Activated CD4-positive, alpha-beta memory T cell treated with anti-CD3 and anti-CD28 coated beads for 36 hours (primary cell): ENCODE measurements at regions of chr12 and their contacts with region 1.

Region 1: DNA sequence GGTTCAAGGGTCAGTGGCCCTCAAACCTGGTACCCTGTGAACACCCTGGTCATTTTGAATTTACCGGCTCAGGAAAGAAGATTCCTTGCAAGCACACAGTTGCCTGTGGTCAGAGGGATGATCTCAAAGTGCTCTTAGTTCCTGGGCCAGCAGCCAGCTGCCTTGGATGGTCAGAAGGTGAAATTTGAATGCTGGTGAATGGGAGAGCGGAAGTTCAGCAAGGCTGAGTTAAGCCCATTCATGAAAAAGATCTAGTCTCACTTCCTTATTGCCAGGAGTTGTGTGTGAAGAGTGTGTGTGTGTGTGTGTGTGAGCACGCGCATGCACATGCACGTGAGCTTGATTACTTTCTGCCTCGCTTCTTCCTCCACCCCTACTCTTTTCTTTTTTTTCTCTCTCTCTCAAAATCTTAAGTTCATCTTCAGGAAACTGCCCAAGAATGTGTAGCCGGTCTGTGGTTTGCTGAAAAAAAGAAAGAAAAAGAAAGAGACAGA is 155.5 kb upstream of the CCND2 start:
- DNase-seq: no peak
- H3K4me3 Mint-ChIP-seq: peak overlapping the region; percentile 33
- H3K27ac Mint-ChIP-seq: peak overlapping the region; percentile 79
- H3K4me1 Mint-ChIP-seq: peaks cover 59% of the 10 kb centered on the region
- H3K27me3 Mint-ChIP-seq: peaks cover 8% of the 10 kb centered on the region

Region 2: GRCh38 chr12:3872800-3873636 is 245.0 kb before region 1 on chr12 and contains the start of gene PARP11:
- CTCF ChIA-PET with region 1: no interaction called
- POLR2A ChIA-PET with region 1: no interaction called
- intact Hi-C with region 1: loop called (anchors 5 kb)
- DNase-seq: peak; percentile 98
- H3K4me3 Mint-ChIP-seq: peak within 1 kb of the TSS; percentile 91
- H3K27ac Mint-ChIP-seq: peak within 1 kb of the TSS; percentile 97
- H3K4me1 Mint-ChIP-seq: peaks cover 46% of the 10 kb centered on the region
- H3K27me3 Mint-ChIP-seq: no peaks in the 10 kb centered on the region
- total RNA-seq, gene PARP11: 16.6 to 17.8 TPM

Region 3: DNA sequence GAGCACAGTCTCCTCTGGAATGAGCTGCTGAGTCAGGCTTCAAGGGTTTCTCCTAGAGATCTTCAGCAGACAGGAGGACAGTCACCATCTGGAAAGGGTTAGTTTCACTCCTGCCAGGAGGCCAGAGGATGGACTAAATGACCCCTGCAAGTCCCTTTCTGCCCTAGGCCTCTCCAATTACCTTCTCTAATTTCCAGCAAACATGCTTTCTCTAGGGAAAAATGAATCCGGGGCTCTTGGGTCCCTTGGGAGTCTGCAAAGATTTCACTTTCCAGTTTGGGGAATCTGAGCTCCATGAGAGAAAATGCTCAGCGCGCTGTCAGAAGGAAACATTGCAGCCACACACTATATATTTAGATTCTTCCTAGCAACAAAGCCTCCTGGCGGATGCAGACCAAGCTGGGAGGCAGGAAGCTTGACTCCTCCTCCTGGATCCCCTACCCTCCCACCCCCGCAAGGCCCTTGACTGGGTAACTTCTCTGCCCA is 28.9 kb before region 1 on chr12:
- CTCF ChIA-PET with region 1: no interaction called
- POLR2A ChIA-PET with region 1: no interaction called
- intact Hi-C with region 1: no loop called
- DNase-seq: no peak
- H3K4me3 Mint-ChIP-seq: no peak overlapping the region
- H3K27ac Mint-ChIP-seq: no peak overlapping the region
- H3K4me1 Mint-ChIP-seq: peaks cover 6% of the 10 kb centered on the region
- H3K27me3 Mint-ChIP-seq: no peaks in the 10 kb centered on the region

Region 4: DNA sequence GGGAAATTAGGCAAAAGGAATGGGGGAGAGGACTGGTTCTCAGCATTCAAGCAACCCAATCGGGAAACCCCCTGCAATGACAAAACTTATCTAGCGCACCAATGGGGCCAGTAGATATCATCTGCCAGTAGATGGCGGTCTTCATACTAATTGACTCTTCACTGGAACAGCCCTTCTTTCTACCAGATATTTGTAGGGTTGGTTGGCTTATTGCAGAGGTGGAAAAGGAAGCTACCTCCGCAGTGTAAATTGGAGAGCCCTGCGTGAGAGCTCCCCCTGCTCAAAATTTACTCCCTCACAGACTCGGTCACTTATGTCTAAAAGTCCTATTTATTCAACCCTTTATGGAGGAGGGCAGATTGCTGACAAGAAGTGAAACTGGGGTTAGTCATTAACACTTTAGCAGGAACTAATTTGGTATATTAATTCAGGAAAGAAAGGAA is 10.6 kb before region 1 on chr12:
- CTCF ChIA-PET with region 1: interaction called, 20 read pairs
- POLR2A ChIA-PET with region 1: interaction called, 4 read pairs
- intact Hi-C with region 1: loop called (anchors 1 kb)
- DNase-seq: peak; percentile 80
- H3K4me3 Mint-ChIP-seq: peak overlapping the region; percentile 17
- H3K27ac Mint-ChIP-seq: peak overlapping the region; percentile 75
- H3K4me1 Mint-ChIP-seq: peaks cover 40% of the 10 kb centered on the region
- H3K27me3 Mint-ChIP-seq: peaks cover 8% of the 10 kb centered on the region

Region 5: GRCh38 chr12:4135919-4136605 is 18.0 kb after region 1 on chr12:
- CTCF ChIA-PET with region 1: interaction called, 5 read pairs
- POLR2A ChIA-PET with region 1: interaction called, 36 read pairs
- intact Hi-C with region 1: loop called (anchors 1 kb)
- DNase-seq: peak; percentile 91
- H3K4me3 Mint-ChIP-seq: peak overlapping the region; percentile 13
- H3K27ac Mint-ChIP-seq: peak overlapping the region; percentile 89
- H3K4me1 Mint-ChIP-seq: peaks cover 52% of the 10 kb centered on the region
- H3K27me3 Mint-ChIP-seq: no peaks in the 10 kb centered on the region

Region 6: GRCh38 chr12:4169959-4170358 is 51.9 kb after region 1 on chr12:
- CTCF ChIA-PET with region 1: no interaction called
- POLR2A ChIA-PET with region 1: no interaction called
- intact Hi-C with region 1: loop called (anchors 2 kb)
- DNase-seq: peak; percentile 72
- H3K4me3 Mint-ChIP-seq: no peak overlapping the region
- H3K27ac Mint-ChIP-seq: peak overlapping the region; percentile 47
- H3K4me1 Mint-ChIP-seq: peaks cover 39% of the 10 kb centered on the region
- H3K27me3 Mint-ChIP-seq: peaks cover 2% of the 10 kb centered on the region

Region 7: GRCh38 chr12:4178424-4179170 is 60.5 kb after region 1 on chr12:
- CTCF ChIA-PET with region 1: interaction called, 4 read pairs
- POLR2A ChIA-PET with region 1: interaction called, 6 read pairs
- intact Hi-C with region 1: loop called (anchors 1 kb)
- DNase-seq: peak; percentile 39
- H3K4me3 Mint-ChIP-seq: peak overlapping the region; percentile 27
- H3K27ac Mint-ChIP-seq: peak overlapping the region; percentile 76
- H3K4me1 Mint-ChIP-seq: peaks cover 20% of the 10 kb centered on the region
- H3K27me3 Mint-ChIP-seq: peaks cover 2% of the 10 kb centered on the region

Region 8: GRCh38 chr12:4215229-4216186 is 97.4 kb after region 1 on chr12:
- CTCF ChIA-PET with region 1: no interaction called
- POLR2A ChIA-PET with region 1: interaction called, 5 read pairs
- intact Hi-C with region 1: loop called (anchors 2 kb)
- DNase-seq: peak; percentile 70
- H3K4me3 Mint-ChIP-seq: peak overlapping the region; percentile 59
- H3K27ac Mint-ChIP-seq: peak overlapping the region; percentile 86
- H3K4me1 Mint-ChIP-seq: peaks cover 36% of the 10 kb centered on the region
- H3K27me3 Mint-ChIP-seq: no peaks in the 10 kb centered on the region